Activated T-helper 2 cell treated with anti-CD3 and anti-CD28 coated beads, Interferon-gamma antibody, Interleukin-2, Interleukin-4, amounts not matched to agents 10 μg/mL and 5 μg/mL and 100 μg/mL, durations not matched to agents 14 hours and 24 hours and 36 hours (primary cell): ENCODE measurements at regions of chr7 and their contacts with region 1.

Region 1: GRCh38 chr7:101287032-101287431 is 34.6 kb downstream of the IFT22 start:
- DNase-seq: no peak
- H3K4me3 Mint-ChIP-seq: no peak overlapping the region
- H3K27ac Mint-ChIP-seq: no peak overlapping the region
- H3K4me1 Mint-ChIP-seq: peaks cover 4% of the 10 kb centered on the region
- H3K27me3 Mint-ChIP-seq: peaks cover 7% of the 10 kb centered on the region

Region 2: DNA sequence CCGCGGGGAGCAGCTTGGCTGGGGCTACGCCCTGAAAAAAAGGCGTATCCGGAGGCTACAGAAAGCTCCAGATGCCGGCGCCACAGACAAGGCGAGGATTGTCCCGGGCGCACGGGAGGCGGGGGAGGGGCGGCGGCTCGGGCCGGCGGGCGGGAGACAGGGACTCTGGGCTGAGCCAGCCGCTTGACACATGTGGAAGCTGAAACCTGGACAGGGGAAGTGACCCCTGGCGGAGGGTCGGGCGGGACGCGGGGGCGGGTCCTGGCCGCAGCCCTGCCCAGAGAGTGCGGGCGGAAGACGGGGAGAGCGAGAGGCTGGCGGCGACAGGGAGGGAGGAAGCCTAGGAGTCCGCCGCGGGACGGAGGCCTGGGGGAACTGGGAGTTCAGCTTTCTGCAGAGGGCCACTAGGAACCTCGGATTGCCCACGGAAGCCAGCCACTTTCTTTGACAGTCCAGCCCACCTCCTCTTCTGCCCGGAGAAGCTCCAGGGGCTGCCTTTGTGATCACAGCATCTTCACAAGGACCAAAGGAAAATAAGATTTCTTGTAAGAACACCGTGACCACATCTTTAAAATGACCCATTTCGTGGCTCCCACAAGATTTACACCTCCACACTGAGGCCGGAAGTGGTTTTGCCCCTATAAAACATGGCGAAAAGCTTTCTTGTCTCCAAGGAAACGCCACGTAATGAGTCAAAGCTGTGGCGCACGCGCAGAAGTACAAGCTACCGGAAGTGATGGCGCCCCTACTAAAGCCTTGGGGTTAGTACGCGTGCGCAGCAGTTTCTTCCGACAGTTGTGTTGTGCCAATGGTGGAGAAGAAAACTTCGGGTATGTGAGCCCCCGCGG is 69.4 kb before region 1 on chr7 and contains the starts of genes PLOD3 and ZNHIT1:
- intact Hi-C with region 1: loop called (anchors 2 kb)
- DNase-seq: peak; percentile 94
- H3K4me3 Mint-ChIP-seq: peak within 1 kb of the TSS; percentile 99
- H3K27ac Mint-ChIP-seq: peak within 1 kb of the TSS; percentile 84
- H3K4me1 Mint-ChIP-seq: peaks cover 22% of the 10 kb centered on the region
- H3K27me3 Mint-ChIP-seq: no peaks in the 10 kb centered on the region
- total RNA-seq, gene PLOD3: 75.5 and 82.8 TPM in 2 replicates
- total RNA-seq, gene ZNHIT1: 45.1 and 46.8 TPM in 2 replicates

Region 3: DNA sequence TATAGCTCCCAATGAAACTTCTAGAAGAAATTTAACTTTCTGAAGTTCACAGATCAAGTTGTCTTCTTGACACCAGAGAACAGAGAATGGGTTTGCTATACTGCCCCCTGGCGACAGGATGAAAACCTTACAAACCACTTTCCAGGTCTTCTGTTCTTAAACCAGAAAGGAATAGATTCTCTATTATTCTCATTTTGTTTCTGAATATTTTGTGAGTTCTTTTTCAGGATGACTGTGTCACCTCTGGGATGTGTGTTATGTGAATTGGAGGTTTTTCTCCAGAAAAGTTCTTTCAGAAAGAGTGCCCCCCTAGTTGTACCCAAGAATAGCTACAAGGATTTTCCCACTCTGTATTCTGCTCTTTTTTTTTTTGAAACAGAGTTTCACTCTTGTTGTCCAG is 28.3 kb after region 1 on chr7:
- intact Hi-C with region 1: loop called (anchors 1 kb)
- DNase-seq: peak; percentile 27
- H3K4me3 Mint-ChIP-seq: no peak overlapping the region
- H3K27ac Mint-ChIP-seq: no peak overlapping the region
- H3K4me1 Mint-ChIP-seq: peaks cover 3% of the 10 kb centered on the region
- H3K27me3 Mint-ChIP-seq: no peaks in the 10 kb centered on the region